ENCODE measurements at regions of chr2 and their contacts with region 1.

Region 1: GRCh38 chr2:55010149-55010591 is 40.1 kb downstream of the RTN4 start:
- DNase-seq: no peak
- ATAC-seq: no peak
- H3K4me3 ChIP-seq: no peak overlapping the region
- H3K27ac ChIP-seq: no peak overlapping the region
- H3K4me1 ChIP-seq: peaks cover 22 to 36% of the 10 kb centered on the region in 2 experiments
- H3K27me3 ChIP-seq: no peaks in the 10 kb centered on the region
- CTCF ChIP-seq: no peak
- POLR2A ChIP-seq: no peak
- RAD21 ChIP-seq: no peak

Region 2: GRCh38 chr2:54803783-54804751 is 206.1 kb before region 1 on chr2:
- CTCF ChIA-PET with region 1: no interaction called
- POLR2A ChIA-PET with region 1: no interaction called
- RAD21 ChIA-PET with region 1: no interaction called
- intact Hi-C with region 1: no loop called
- DNase-seq: no peak
- ATAC-seq: no peak
- H3K4me3 ChIP-seq: no peak overlapping the region
- H3K27ac ChIP-seq: no peak overlapping the region
- H3K4me1 ChIP-seq: no peaks in the 10 kb centered on the region
- H3K27me3 ChIP-seq: no peaks in the 10 kb centered on the region
- CTCF ChIP-seq: no peak
- POLR2A ChIP-seq: no peak
- RAD21 ChIP-seq: no peak

Region 3: GRCh38 chr2:54983345-54984260 is 26.6 kb before region 1 on chr2:
- CTCF ChIA-PET with region 1: interaction called, 3 read pairs
- POLR2A ChIA-PET with region 1: no interaction called
- RAD21 ChIA-PET with region 1: no interaction called
- intact Hi-C with region 1: loop called (anchors 1 kb)
- DNase-seq: peak; percentile 4
- ATAC-seq: peak; percentile 48
- H3K4me3 ChIP-seq: no peak overlapping the region
- H3K27ac ChIP-seq: no peak overlapping the region
- H3K4me1 ChIP-seq: peaks cover 7 to 29% of the 10 kb centered on the region in 2 experiments; a peak in 3 of 4 replicates
- H3K27me3 ChIP-seq: no peaks in the 10 kb centered on the region
- CTCF ChIP-seq: no peak
- POLR2A ChIP-seq: no peak
- RAD21 ChIP-seq: no peak

Measured in HCT116 (cell line).